Activated CD4-positive, alpha-beta T cell treated with anti-CD3 and anti-CD28 coated beads for 36 hours (primary cell): ENCODE measurements at regions of chr17 and their contacts with region 1.

Region 1: GRCh38 chr17:37518826-37519225 is 29.1 kb downstream of the DUSP14 start:
- DNase-seq: no peak
- ATAC-seq: no peak
- H3K4me3 Mint-ChIP-seq: no peak overlapping the region
- H3K27ac Mint-ChIP-seq: no peak overlapping the region
- H3K4me1 Mint-ChIP-seq: peaks cover 3% of the 10 kb centered on the region
- H3K27me3 Mint-ChIP-seq: no peaks in the 10 kb centered on the region

Region 2: DNA sequence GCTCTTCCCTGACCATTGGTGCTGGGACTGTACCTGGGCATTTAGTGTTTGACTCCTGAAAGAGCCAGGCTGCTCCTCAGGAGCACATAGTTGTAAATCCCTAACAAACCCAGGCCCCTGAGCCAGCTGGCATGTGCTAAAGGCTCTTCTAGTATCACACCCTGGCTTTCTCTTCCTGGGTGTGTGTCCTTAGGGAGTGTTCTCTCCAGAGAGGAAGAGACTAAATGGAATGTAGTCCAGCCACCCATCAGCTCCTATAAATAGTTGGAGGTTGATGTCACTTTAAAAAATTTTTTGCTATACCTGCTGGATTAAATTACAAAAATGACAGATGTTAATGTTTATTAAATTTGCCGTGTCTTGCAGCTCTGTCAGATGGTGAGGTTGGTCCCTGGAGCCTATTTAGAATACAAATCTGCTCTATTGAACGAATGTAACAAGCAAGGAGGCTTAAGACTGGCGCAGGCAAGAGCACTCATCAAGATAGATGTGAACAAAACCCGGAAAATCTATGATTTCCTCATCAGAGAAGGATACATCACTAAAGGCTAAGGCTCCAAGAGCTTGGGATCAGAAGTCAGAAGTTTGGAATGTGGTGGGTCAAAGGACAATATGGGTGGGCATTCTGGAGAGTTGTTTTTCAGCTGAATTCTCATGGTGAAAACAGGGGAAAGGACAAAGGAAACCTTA is 42.2 kb before region 1 on chr17:
- CTCF ChIA-PET with region 1: no interaction called
- POLR2A ChIA-PET with region 1: no interaction called
- intact Hi-C with region 1: no loop called
- DNase-seq: no peak
- ATAC-seq: no peak
- H3K4me3 Mint-ChIP-seq: no peak overlapping the region
- H3K27ac Mint-ChIP-seq: no peak overlapping the region
- H3K4me1 Mint-ChIP-seq: no peaks in the 10 kb centered on the region
- H3K27me3 Mint-ChIP-seq: no peaks in the 10 kb centered on the region

Region 3: DNA sequence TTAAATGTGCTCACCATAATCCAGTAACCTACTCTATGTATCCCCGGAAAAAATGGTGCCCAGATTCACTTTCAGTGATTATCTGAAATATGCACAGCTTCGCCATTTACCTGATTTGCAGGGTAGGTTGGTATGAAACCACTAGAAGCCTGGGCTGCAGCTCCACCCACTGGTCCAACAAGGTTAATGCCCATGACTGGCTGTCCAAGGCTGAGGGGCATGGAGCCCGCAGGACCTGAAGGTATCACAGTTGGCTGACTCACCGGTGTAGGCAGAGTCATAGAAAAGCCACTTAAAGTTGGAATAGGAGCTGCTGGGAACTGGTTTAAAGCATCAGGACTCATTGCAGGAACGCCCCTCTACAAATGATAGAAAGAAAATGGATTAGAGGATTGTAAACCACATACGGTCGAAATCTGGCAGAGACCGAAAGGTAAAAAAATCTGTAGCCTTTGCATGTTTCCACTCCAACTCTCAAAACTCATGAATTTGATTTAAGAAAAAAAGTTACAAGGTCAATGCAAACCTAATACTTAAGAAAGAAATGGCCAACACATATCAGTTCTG is 51.8 kb after region 1 on chr17:
- CTCF ChIA-PET with region 1: no interaction called
- POLR2A ChIA-PET with region 1: no interaction called
- intact Hi-C with region 1: no loop called
- DNase-seq: peak; percentile 61
- ATAC-seq: peak; percentile 76
- H3K4me3 Mint-ChIP-seq: no peak overlapping the region
- H3K27ac Mint-ChIP-seq: no peak overlapping the region
- H3K4me1 Mint-ChIP-seq: no peaks in the 10 kb centered on the region
- H3K27me3 Mint-ChIP-seq: no peaks in the 10 kb centered on the region

Region 4: GRCh38 chr17:37643118-37643766 is 124.4 kb after region 1 on chr17 and contains the start of gene DDX52:
- CTCF ChIA-PET with region 1: no interaction called
- POLR2A ChIA-PET with region 1: no interaction called
- intact Hi-C with region 1: no loop called
- DNase-seq: peak; percentile 93
- ATAC-seq: peak; percentile 99
- H3K4me3 Mint-ChIP-seq: peak within 1 kb of the TSS; percentile 94
- H3K27ac Mint-ChIP-seq: peak within 1 kb of the TSS; percentile 91
- H3K4me1 Mint-ChIP-seq: peaks cover 25% of the 10 kb centered on the region
- H3K27me3 Mint-ChIP-seq: peaks cover 24% of the 10 kb centered on the region
- total RNA-seq, gene DDX52: 34.6 to 41.7 TPM

Region 5: DNA sequence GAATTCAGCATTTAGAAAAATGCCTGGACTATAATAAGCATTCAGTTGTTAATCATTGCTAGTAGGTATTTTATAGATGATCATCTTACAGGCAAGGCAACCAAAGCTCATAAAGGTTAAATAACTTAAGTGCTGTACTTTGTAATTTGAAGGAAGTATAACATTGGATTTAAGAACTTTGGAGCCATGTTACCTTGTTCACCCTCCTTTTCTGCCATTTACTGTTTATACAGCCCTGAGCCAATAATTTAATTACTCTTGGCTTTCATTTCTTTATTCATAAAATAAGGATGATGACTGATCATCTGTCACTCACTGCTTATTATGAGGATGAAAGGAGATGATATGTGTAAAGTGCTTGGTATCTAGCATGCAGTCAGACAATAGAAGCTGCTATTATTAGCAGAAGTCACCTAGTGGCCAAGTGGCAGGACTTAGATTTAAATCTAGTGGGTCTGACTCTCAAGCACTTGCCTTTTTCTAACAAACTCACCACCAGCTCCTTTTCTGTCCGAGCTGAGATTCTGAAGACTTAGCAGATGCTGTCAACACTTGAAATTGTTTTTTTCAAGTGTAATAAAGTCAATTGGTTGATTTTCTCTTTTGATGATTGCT is 142.7 kb after region 1 on chr17:
- CTCF ChIA-PET with region 1: no interaction called
- POLR2A ChIA-PET with region 1: interaction called, 11 read pairs
- intact Hi-C with region 1: no loop called
- DNase-seq: no peak
- ATAC-seq: no peak
- H3K4me3 Mint-ChIP-seq: no peak overlapping the region
- H3K27ac Mint-ChIP-seq: no peak overlapping the region
- H3K4me1 Mint-ChIP-seq: no peaks in the 10 kb centered on the region
- H3K27me3 Mint-ChIP-seq: peaks cover 3% of the 10 kb centered on the region